Right ventricle myocardium superior (tissue), 1 donor: ENCODE measurements at regions of chr11 and their contacts with region 1.

Region 1: GRCh38 chr11:2612884-2613571 is 86.8 kb downstream of the KCNQ1OT1 start:
- DNase-seq: no peak
- ATAC-seq: no peak

Region 2: GRCh38 chr11:2510626-2511402 is 102.2 kb before region 1 on chr11:
- intact Hi-C with region 1: no loop called
- DNase-seq: peak; percentile 46
- ATAC-seq: peak; percentile 11

Region 3: GRCh38 chr11:2549876-2550620 is 63.0 kb before region 1 on chr11:
- intact Hi-C with region 1: loop called (anchors 10 kb)
- DNase-seq: peak; percentile 66
- ATAC-seq: peak; percentile 90